RWPE1 (cell line): ENCODE measurements at regions of chr1 and their contacts with region 1.

Region 1: GRCh38 chr1:160101037-160101716 is 2.8 kb upstream of the IGSF8 start:
- DNase-seq: peak; percentile 75
- H3K27ac ChIP-seq: no peak overlapping the region
- CTCF ChIP-seq: peak; percentile 95

Region 2: GRCh38 chr1:160144921-160145320 is 43.7 kb after region 1 on chr1:
- CTCF ChIA-PET with region 1: no interaction called
- POLR2A ChIA-PET with region 1: no interaction called
- DNase-seq: no peak
- H3K27ac ChIP-seq: no peak overlapping the region
- CTCF ChIP-seq: no peak

Region 3: DNA sequence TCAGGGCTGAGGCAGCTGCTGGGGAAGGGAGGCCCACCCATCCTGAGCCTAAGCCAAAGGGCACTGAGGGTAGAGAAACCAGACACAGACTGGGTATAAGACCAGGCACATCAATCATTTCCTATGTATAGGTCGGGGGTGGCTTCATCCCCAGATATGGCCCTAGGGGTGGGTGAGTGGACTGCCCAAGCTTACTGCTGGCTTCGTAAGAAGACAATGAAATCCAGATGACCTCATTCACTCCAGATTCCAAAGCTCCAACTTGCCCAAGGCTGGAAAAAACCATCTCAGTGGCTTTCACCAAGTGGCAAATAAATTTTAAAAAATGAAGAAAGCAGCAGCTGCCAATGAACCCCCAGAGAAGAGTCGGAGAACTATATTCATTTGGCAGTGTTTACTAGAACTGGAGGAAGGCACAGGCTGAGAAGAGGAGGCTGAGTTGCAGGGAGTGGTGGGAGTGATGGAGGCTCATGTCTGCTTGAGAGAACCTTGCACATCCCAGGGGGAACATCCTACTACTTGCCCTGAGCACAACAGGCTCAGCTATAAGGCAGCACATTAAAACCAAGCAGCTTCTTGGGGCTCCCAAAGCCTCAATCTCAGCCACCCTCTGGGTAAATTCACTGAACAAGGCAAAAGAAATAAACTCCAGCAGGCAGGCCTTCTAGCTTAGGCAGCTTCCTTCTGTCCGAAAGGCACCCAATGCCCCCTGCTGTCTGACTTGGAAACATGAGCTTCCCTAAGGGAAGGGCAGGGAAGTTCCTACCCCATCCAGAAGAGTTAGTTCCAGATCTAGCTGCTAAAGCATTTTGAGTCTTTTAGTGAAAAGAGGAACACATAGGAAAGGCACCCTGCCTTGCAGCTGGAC is 118.1 kb after region 1 on chr1:
- CTCF ChIA-PET with region 1: interaction called, 15 read pairs
- POLR2A ChIA-PET with region 1: no interaction called
- DNase-seq: peak; percentile 45
- H3K27ac ChIP-seq: peak overlapping the region; percentile 40
- CTCF ChIP-seq: no peak

Region 4: GRCh38 chr1:160251687-160252526 is 150.7 kb after region 1 on chr1:
- CTCF ChIA-PET with region 1: interaction called, 10 read pairs
- POLR2A ChIA-PET with region 1: no interaction called
- DNase-seq: peak; percentile 66
- H3K27ac ChIP-seq: no peak overlapping the region
- CTCF ChIP-seq: peak; percentile 72

Region 5: GRCh38 chr1:160291248-160292220 is 190.4 kb after region 1 on chr1:
- CTCF ChIA-PET with region 1: interaction called, 13 read pairs
- POLR2A ChIA-PET with region 1: no interaction called
- DNase-seq: peak; percentile 71
- H3K27ac ChIP-seq: no peak overlapping the region
- CTCF ChIP-seq: peak; percentile 82

Region 6: GRCh38 chr1:160704250-160704649 is 603.1 kb after region 1 on chr1:
- CTCF ChIA-PET with region 1: no interaction called
- POLR2A ChIA-PET with region 1: no interaction called
- DNase-seq: no peak
- H3K27ac ChIP-seq: no peak overlapping the region
- CTCF ChIP-seq: no peak